Right cardiac atrium (tissue), 5 donors: ENCODE measurements at regions of chr22 and their contacts with region 1.

Region 1: DNA sequence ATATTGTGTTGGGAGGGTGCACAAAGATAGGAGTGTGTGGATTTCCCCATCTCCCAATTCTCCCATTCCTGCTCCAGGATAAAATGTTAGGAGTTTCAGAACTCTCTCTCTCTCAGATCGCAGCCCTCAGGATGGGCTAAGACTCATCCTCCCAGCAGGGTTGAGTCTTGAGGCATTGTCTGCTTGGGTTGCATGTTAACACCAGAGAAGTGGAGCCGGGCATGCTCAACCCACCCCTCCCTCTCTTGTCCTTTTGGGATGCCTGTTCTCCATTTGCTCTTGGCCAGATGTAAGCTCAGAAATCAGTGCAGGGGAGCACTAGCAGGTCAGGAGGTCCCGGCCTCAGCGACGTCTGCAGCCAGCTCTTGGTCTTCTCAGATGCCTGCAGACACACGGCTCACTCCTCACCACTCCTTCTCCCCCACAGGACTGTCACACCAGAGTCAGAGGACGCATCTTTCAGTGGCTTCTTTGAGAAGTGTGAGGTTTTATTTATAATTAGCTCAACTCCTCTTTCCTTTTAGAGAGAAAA is 1456.5 kb downstream of the TBC1D22A start:
- DNase-seq: no peak
- ATAC-seq: no peak
- H3K4me3 ChIP-seq: no peak overlapping the region
- H3K27ac ChIP-seq: no peak overlapping the region
- H3K4me1 ChIP-seq: no peaks in the 10 kb centered on the region
- H3K27me3 ChIP-seq: no peaks in the 10 kb centered on the region

Region 2: GRCh38 chr22:48153726-48154125 is 65.2 kb before region 1 on chr22:
- intact Hi-C with region 1: loop called in 1 of 4 experiments (anchors 10 kb)
- DNase-seq: no peak
- ATAC-seq: no peak
- H3K4me3 ChIP-seq: no peak overlapping the region
- H3K27ac ChIP-seq: no peak overlapping the region
- H3K4me1 ChIP-seq: no peaks in the 10 kb centered on the region
- H3K27me3 ChIP-seq: no peaks in the 10 kb centered on the region

Region 3: GRCh38 chr22:48277868-48278581 is 59.1 kb after region 1 on chr22:
- intact Hi-C with region 1: loop called in 1 of 4 experiments (anchors 10 kb)
- DNase-seq: no peak
- ATAC-seq: no peak
- H3K4me3 ChIP-seq: no peak overlapping the region
- H3K27ac ChIP-seq: no peak overlapping the region
- H3K4me1 ChIP-seq: no peaks in the 10 kb centered on the region
- H3K27me3 ChIP-seq: no peaks in the 10 kb centered on the region

Region 4: DNA sequence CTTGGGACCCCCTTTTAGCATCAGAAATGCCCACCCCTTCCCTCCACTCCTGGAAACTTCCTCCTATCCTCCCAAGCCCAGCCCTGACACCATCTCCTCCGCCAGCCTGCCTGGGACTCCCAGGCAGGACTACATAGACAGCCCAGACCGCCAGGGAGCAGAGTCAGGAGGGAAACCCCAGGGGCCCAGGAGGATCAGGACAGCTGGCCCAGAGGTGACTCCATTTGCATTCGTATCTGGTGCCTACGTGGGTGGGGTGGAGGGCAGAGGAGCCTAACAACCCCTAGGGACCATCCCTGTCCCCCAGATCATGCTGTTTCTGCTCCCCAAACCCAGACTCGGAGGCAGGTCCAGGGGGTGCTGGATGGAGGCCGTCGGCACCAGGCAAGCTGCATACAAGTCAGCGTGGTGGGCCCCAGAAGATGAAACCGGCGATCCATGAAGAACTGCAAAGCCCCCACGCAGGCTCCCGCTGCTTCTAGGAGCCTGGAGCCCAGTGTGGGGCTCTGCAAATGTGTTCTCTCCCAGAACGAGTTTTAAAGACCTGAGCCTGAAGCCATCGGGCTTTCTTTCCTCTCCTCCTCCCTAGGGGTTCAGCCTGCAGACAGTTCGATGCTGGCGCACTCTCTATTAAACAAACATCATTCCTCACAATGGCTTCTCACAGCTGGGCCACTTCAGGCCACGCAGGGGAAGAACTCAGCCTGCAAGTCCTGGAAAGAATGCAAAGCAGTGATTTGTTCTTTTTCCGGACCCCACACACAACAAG is 101.9 kb after region 1 on chr22:
- intact Hi-C with region 1: no loop called
- DNase-seq: peak in 1 of 3 donors; percentile 11
- ATAC-seq: no peak
- H3K4me3 ChIP-seq: no peak overlapping the region
- H3K27ac ChIP-seq: no peak overlapping the region
- H3K4me1 ChIP-seq: no peaks in the 10 kb centered on the region
- H3K27me3 ChIP-seq: no peaks in the 10 kb centered on the region

Region 5: DNA sequence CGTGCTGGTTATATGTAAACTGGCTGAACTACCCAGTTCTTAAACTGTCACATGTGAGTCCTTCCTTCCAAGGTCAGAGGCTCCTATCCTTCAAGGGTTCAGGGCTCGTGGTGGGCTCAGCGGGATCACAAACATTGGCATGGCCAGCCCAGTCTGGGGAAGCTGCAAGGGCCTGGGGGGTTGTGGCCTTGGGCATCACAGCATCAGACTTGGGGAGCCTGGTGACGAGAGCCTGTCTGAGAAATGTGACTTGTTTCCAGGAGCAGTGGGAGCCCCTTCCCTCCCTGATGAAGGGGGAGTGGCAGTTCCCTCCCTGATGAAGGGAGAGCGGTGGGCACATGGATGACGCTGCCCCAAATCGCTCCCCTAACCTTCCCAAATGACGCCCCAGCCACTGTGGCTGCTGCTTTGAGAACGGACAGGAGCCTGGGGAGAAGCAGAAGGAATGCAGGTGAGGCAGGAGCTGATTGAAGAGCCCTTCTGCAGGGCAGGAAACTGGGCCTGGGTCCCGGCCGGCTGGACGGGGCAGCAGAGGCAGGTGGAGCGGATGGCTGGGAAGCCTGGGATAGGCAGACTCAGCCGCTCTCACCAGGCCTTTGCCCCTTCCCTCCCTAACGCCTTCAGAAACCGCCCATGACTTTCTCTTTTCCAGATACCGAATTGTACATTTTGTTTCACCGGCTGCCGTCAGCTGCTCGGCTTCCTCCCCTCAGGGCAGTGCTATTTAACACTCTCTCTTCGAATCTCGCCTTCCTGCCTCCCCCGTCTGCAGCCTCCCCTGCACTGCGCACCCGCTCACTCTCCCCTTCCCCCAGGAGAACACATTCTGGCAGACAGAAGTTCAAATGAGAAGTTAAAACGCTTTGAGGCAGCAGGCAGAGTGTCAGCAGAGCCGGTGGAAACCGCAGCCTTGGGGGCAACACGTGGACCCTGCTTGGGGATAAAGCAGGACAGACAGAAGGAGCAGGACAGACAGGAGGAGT is 122.1 kb after region 1 on chr22:
- intact Hi-C with region 1: no loop called
- DNase-seq: no peak
- ATAC-seq: no peak
- H3K4me3 ChIP-seq: no peak overlapping the region
- H3K27ac ChIP-seq: no peak overlapping the region
- H3K4me1 ChIP-seq: no peaks in the 10 kb centered on the region
- H3K27me3 ChIP-seq: no peaks in the 10 kb centered on the region